Breast epithelium (tissue), 4 donors: ENCODE measurements at regions of chr6 and their contacts with region 1.

Region 1: GRCh38 chr6:39143233-39143930 is 28.4 kb upstream of the SAYSD1 start:
- DNase-seq: no peak
- H3K4me3 ChIP-seq: no peak overlapping the region
- H3K27ac ChIP-seq: no peak overlapping the region
- H3K4me1 ChIP-seq: no peaks in the 10 kb centered on the region
- H3K27me3 ChIP-seq: peaks cover 0 to 9% of the 10 kb centered on the region in 2 donors
- CTCF ChIP-seq: no peak
- POLR2A ChIP-seq: no peak

Region 2: GRCh38 chr6:39111280-39111679 is 32.1 kb before region 1 on chr6:
- intact Hi-C with region 1: no loop called
- DNase-seq: no peak
- H3K4me3 ChIP-seq: no peak overlapping the region
- H3K27ac ChIP-seq: no peak overlapping the region
- H3K4me1 ChIP-seq: peaks cover 0 to 5% of the 10 kb centered on the region in 2 donors
- H3K27me3 ChIP-seq: no peaks in the 10 kb centered on the region
- CTCF ChIP-seq: no peak
- POLR2A ChIP-seq: no peak

Region 3: DNA sequence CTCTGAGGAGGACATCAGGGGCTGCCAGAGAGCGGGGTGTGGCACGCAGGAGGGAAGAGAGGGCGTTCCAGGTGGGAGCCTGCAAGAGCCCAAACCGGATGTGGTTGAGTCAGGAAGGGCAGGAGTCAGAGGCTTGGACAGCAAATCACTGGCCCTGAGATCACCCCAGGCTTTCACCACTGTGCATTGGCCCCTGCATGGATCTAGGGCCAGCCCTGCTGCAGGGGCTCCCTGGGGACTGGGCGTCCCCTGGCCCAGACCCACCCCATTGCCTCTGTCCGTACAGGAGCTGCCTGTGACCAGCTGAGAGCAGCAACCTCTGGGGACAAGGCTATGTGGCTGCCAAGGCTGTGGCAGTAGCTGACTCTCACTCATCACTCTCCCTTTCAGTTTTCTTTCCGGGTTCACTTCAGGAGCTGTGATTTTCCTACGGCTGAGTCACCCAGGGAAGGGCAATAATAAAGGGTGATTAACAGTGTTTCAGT is 136.9 kb after region 1 on chr6:
- intact Hi-C with region 1: no loop called
- DNase-seq: no peak
- H3K4me3 ChIP-seq: no peak overlapping the region
- H3K27ac ChIP-seq: peak overlapping the region; percentile 19 to 73
- H3K4me1 ChIP-seq: no peaks in the 10 kb centered on the region
- H3K27me3 ChIP-seq: no peaks in the 10 kb centered on the region
- CTCF ChIP-seq: no peak
- POLR2A ChIP-seq: no peak

Region 4: GRCh38 chr6:41039060-41039998 is 1895.9 kb after region 1 on chr6 and contains the start of gene UNC5CL:
- intact Hi-C with region 1: loop called (anchors 10 kb)
- DNase-seq: no peak
- H3K4me3 ChIP-seq: no peak within 1 kb of the TSS
- H3K27ac ChIP-seq: no peak within 1 kb of the TSS
- H3K4me1 ChIP-seq: no peaks in the 10 kb centered on the region
- H3K27me3 ChIP-seq: no peaks in the 10 kb centered on the region
- CTCF ChIP-seq: peak in 2 of 3 donors; percentile 38 to 55
- POLR2A ChIP-seq: no peak
- total RNA-seq, gene UNC5CL: 1.1 to 2.0 (median 1.8) TPM